ENCODE measurements at regions of chr2 and their contacts with region 1.

Region 1: GRCh38 chr2:202238234-202239197 is at the start of gene SUMO1:
- DNase-seq: peak; percentile 93
- ATAC-seq: peak; percentile 89
- H3K4me3 Mint-ChIP-seq: peak within 1 kb of the TSS; percentile 97
- H3K27ac Mint-ChIP-seq: peak within 1 kb of the TSS; percentile 98
- H3K4me1 Mint-ChIP-seq: peaks cover 21% of the 10 kb centered on the region
- H3K27me3 Mint-ChIP-seq: no peaks in the 10 kb centered on the region
- CTCF ChIP-seq: no peak
- total RNA-seq, gene SUMO1: 172 to 181 TPM (median 172 TPM) in 3 replicates

Region 2: DNA sequence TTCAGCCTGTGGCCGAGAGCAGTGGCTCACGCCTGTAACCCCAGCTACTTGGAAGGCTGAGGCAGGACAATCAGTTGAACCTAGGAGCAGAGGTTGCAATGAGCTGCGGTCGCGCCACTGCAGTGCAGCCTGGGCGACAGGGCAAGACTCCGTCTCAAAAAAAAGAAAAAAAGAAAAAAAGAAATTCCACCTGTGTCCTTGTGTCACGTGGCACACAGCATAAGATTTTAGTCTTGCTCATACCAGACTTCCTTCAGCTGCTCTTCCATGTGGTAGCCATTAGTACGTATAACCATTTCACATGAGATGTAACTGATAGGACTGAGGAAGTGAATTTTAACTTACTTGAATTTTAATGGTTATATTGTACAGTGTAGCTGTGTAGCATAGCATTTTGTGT is 31.1 kb after region 1 on chr2:
- CTCF ChIA-PET with region 1: no interaction called
- POLR2A ChIA-PET with region 1: interaction called, 13 read pairs
- DNase-seq: no peak
- ATAC-seq: no peak
- H3K4me3 Mint-ChIP-seq: peak overlapping the region; percentile 25
- H3K27ac Mint-ChIP-seq: peak overlapping the region; percentile 72
- H3K4me1 Mint-ChIP-seq: peaks cover 26% of the 10 kb centered on the region
- H3K27me3 Mint-ChIP-seq: no peaks in the 10 kb centered on the region
- CTCF ChIP-seq: no peak

Region 3: DNA sequence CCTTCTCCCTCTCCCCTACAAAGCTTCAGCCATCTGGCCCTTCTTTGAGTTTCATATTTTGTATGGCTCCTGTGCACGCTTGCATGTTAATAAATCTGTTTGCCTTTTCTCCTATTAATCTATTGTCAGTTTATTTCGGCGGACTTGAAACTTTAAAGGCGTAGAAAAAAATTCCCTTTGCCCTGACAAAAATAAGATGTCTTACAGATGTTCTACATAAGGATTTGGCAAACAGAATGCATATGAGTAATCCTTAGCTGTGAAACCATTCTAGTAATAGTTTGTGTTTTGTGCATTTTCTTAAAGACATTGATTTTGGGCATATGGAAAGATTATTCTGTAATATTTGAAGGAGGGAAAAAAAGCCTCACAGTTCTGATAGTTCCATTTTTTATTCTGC is 122.6 kb after region 1 on chr2:
- CTCF ChIA-PET with region 1: no interaction called
- POLR2A ChIA-PET with region 1: no interaction called
- DNase-seq: no peak
- ATAC-seq: no peak
- H3K4me3 Mint-ChIP-seq: no peak overlapping the region
- H3K27ac Mint-ChIP-seq: 0 out of 2 replicates have a peak overlapping the region, but pooled peaks have one; percentile 36
- H3K4me1 Mint-ChIP-seq: peaks cover 29% of the 10 kb centered on the region
- H3K27me3 Mint-ChIP-seq: no peaks in the 10 kb centered on the region
- CTCF ChIP-seq: no peak

Measured in WTC11 (cell line).